ENCODE measurements at regions of chr12 and their contacts with region 1.

Region 1: DNA sequence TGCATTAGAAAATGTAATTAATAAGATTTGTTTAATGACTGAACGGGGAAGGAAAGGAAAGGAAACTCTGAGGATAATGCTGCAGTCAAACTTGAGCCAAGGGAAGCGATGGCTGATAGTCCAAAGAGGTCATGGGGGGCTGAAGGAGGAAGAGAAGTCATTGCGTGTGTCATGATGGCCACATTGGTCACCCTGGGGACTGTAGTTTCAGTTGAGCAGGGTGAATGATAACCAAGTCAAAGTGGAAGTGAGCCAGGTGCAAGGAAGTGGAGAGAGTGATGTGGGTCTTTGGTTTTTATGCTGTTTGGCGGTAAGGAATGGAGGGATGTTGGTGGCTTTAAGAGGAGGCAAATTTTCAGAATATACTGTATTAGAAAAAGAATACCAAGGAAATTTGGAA is 21.6 kb downstream of the C12orf75 start:
- DNase-seq: peak; percentile 82
- H3K4me3 ChIP-seq: peak overlapping the region; percentile 37
- H3K27ac ChIP-seq: peak overlapping the region; percentile 74
- H3K4me1 ChIP-seq: peaks cover 93% of the 10 kb centered on the region
- CTCF ChIP-seq: no peak

Region 2: GRCh38 chr12:104763168-104763805 is 588.8 kb before region 1 on chr12:
- CTCF ChIA-PET with region 1: no interaction called
- POLR2A ChIA-PET with region 1: no interaction called
- intact Hi-C with region 1: no loop called
- DNase-seq: no peak
- H3K4me3 ChIP-seq: no peak overlapping the region
- H3K27ac ChIP-seq: no peak overlapping the region
- H3K4me1 ChIP-seq: peaks cover 15% of the 10 kb centered on the region
- CTCF ChIP-seq: no peak

Region 3: GRCh38 chr12:104986022-104986941 is 365.8 kb before region 1 on chr12 and contains the start of gene NOPCHAP1:
- CTCF ChIA-PET with region 1: no interaction called
- POLR2A ChIA-PET with region 1: no interaction called
- intact Hi-C with region 1: no loop called
- DNase-seq: peak; percentile 86
- H3K4me3 ChIP-seq: peak within 1 kb of the TSS; percentile 78
- H3K27ac ChIP-seq: no peak within 1 kb of the TSS
- H3K4me1 ChIP-seq: peaks cover 33% of the 10 kb centered on the region
- CTCF ChIP-seq: no peak
- total RNA-seq, gene NOPCHAP1: 12.1 and 15.2 TPM in 2 replicates

Region 4: DNA sequence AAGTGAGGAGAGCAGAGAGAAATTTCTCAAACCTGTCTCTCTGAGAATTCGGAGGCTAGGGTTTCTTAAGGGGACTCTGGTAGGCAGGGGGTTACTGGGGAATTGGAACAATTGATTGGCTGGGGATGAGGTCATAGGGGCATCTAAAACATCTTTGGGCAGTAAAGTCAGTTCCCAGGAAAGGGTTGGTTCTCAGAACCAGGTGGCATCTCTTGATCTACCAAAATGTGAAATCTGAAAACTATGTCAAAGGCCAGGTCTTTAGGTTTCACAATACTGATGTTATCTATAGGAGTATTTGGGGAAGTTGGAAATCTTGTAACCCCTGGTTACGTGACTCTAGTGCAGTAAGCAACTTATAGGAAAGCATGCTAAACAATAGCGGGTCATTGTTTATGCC is 14.7 kb before region 1 on chr12:
- CTCF ChIA-PET with region 1: interaction called, 5 read pairs
- POLR2A ChIA-PET with region 1: interaction called, 157 read pairs
- intact Hi-C with region 1: no loop called
- DNase-seq: no peak
- H3K4me3 ChIP-seq: no peak overlapping the region
- H3K27ac ChIP-seq: no peak overlapping the region
- H3K4me1 ChIP-seq: peaks cover 60% of the 10 kb centered on the region
- CTCF ChIP-seq: no peak

Region 5: DNA sequence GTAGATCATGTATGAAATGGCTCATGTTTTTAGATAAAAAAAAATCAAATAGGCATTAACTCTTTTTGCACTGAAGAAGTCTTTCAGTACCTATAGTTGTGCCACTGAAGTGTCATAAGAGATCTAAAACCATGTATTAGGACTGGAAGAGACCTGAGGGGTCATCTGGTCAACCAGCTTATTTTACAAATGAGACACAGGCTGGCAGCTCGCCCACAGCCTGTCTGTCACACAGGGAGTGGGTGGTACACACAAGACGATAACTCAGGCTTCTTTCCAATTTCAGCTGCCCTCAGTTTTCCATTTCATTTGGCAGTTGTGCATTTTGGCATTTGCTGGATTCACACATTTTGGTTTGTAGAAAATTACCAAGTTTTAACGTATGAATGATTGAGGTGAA is 13.2 kb after region 1 on chr12:
- CTCF ChIA-PET with region 1: no interaction called
- POLR2A ChIA-PET with region 1: interaction called, 22 read pairs
- intact Hi-C with region 1: no loop called
- DNase-seq: no peak
- H3K4me3 ChIP-seq: no peak overlapping the region
- H3K27ac ChIP-seq: no peak overlapping the region
- H3K4me1 ChIP-seq: peaks cover 27% of the 10 kb centered on the region
- CTCF ChIP-seq: no peak